PC-9 (cell line): ENCODE measurements at regions of chr9 and their contacts with region 1.

Region 1: DNA sequence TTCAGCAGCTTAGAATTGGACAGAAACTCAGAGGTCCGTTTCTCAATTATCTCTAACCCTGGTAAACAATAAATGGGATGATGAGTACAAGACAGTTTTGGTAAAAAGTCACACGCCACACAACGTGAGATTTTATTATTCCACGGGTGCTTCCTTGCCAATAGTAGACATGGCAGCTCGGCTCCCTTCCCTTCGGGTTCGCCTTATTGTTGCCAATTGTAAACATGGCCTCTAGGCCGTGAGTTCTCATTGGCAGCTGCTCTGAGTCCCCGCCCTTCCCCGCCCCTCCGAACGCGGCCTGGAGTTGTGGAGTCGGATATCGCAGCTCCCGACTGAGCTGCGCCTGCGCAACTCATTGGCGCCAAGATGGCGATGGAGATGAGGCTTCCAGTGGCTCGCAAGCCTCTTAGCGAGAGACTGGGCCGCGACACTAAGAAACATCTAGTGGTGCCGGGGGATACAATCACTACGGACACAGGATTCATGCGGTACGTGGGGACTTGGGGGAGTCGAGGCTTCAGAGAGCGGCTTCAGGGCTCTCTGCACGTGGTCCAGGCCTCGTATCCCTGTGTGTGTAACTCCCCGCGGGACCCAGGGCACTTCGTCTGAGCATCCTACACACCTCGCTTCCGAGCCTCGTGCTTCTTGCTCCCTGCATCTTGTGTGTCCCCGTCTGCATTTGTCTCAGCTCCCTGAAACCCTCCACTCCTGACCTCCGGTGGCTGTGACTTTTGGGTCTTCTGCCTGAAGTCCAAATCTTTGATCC is at the start of gene EXOSC2:
- DNase-seq: peak; percentile 90 to 95
- H3K4me3 ChIP-seq: peak within 1 kb of the TSS; percentile 88
- H3K27ac ChIP-seq: no peak within 1 kb of the TSS
- H3K4me1 ChIP-seq: peaks cover 22% of the 10 kb centered on the region
- H3K27me3 ChIP-seq: no peaks in the 10 kb centered on the region
- CTCF ChIP-seq: no peak
- total RNA-seq, gene EXOSC2: 49.5 and 52.0 TPM in 2 replicates

Region 2: DNA sequence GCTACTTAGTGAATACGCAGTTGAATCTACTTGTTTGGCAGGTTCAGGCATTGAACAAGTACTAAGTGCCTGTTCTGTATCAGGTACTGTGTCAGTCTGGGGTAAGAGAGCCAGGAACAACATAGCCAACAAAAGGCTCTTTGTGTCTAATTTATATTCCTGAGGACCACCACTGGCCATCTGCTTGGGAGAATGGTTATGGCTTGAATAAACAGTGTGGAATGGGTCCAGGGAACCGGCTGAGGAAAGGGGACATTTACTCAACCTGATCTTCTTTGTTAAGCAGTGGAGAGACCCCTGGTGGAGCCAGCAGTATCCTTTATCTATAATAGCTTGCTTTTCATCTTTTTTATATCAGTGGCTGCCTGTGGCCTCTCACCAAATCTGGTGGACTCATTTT is 38.5 kb after region 1 on chr9:
- CTCF ChIA-PET with region 1: no interaction called
- POLR2A ChIA-PET with region 1: interaction called, 12 read pairs
- intact Hi-C with region 1: no loop called
- DNase-seq: no peak
- H3K4me3 ChIP-seq: no peak overlapping the region
- H3K27ac ChIP-seq: no peak overlapping the region
- H3K4me1 ChIP-seq: peaks cover 23% of the 10 kb centered on the region
- H3K27me3 ChIP-seq: no peaks in the 10 kb centered on the region
- CTCF ChIP-seq: no peak

Region 3: GRCh38 chr9:130901498-130902203 is 208.0 kb after region 1 on chr9:
- CTCF ChIA-PET with region 1: no interaction called
- POLR2A ChIA-PET with region 1: no interaction called
- intact Hi-C with region 1: no loop called
- DNase-seq: no peak
- H3K4me3 ChIP-seq: no peak overlapping the region
- H3K27ac ChIP-seq: no peak overlapping the region
- H3K4me1 ChIP-seq: no peaks in the 10 kb centered on the region
- H3K27me3 ChIP-seq: peaks cover 28% of the 10 kb centered on the region
- CTCF ChIP-seq: no peak